HepG2 (cell line): ENCODE measurements at regions of chr9 and their contacts with region 1.

Region 1: GRCh38 chr9:4740638-4741364 is at the start of gene AK3:
- DNase-seq: peak; percentile 83
- ATAC-seq: peak; percentile 93
- H3K4me3 ChIP-seq: peak within 1 kb of the TSS; percentile 93 to 98 (median 96)
- H3K27ac ChIP-seq: peak within 1 kb of the TSS; percentile 100
- H3K4me1 ChIP-seq: peaks cover 40% of the 10 kb centered on the region
- H3K27me3 ChIP-seq: no peaks in the 10 kb centered on the region
- CTCF ChIP-seq: peak; percentile 70
- EP300 ChIP-seq: peak in 1 of 2 experiments; percentile 50; a peak in 1 of 4 replicates
- POLR2A ChIP-seq: peak; percentile 87 to 89
- RAD21 ChIP-seq: peak; percentile 86
- total RNA-seq, gene AK3: 109 and 153 TPM in 2 replicates

Region 2: DNA sequence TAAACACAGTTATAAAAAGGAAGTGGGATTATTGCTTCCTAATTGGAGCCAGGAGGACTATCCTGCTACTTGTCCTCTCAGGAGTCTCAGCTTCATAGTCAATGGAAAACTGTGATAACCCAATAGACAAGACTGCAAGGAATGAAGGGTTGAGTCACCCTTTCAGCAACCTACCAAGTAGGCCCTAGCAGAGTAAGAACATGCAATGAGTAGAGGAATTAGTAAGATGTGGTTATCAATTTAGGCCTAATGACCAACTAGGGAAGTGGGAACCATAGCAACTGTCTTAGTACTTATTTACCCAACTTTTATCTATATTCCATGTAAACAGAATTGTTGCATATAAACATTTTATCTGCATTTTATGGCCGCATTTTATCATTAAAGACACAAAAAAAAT is 1525.1 kb before region 1 on chr9:
- CTCF ChIA-PET with region 1: no interaction called
- POLR2A ChIA-PET with region 1: no interaction called
- in situ Hi-C with region 1: no loop called
- intact Hi-C with region 1: no loop called
- DNase-seq: no peak
- ATAC-seq: no peak
- H3K4me3 ChIP-seq: no peak overlapping the region
- H3K27ac ChIP-seq: no peak overlapping the region
- H3K4me1 ChIP-seq: no peaks in the 10 kb centered on the region
- H3K27me3 ChIP-seq: no peaks in the 10 kb centered on the region
- CTCF ChIP-seq: no peak
- EP300 ChIP-seq: no peak
- POLR2A ChIP-seq: no peak
- RAD21 ChIP-seq: no peak

Region 3: DNA sequence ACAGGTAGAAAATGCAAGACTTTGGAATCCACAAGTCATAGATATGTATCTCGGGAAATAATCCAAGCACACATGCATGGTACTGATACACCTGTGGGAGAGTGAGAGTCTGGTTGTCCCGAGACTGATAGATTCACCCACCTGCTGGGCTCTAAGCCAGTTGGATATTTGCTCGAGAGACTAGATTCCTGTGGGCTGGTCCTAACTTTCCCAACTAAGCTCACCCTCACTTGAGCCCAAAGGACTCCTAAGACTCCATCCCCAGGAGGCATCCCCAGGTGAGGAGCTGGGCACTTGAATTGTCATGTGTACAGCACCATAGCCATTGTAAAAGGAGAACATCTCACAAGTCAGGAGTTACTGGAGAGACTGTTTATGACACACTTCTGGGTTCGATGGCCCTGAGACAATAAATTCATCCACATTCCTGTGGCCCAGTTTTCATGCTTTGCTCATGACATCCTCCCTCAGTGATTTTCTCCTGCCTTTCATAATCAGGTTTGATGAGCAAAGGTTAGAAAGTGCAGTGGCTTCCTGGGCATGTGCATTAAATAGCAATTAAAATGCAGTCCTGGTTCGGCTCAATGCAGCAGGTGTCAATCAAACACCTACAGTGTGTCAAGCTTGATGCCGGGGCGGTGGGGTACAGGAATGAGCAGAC is 232.4 kb before region 1 on chr9:
- CTCF ChIA-PET with region 1: no interaction called
- POLR2A ChIA-PET with region 1: no interaction called
- in situ Hi-C with region 1: no loop called
- intact Hi-C with region 1: no loop called
- DNase-seq: no peak
- ATAC-seq: no peak
- H3K4me3 ChIP-seq: no peak overlapping the region
- H3K27ac ChIP-seq: no peak overlapping the region
- H3K4me1 ChIP-seq: 0 out of 2 replicates have a peak, but pooled peaks cover 6% of the 10 kb centered on the region
- H3K27me3 ChIP-seq: no peaks in the 10 kb centered on the region
- CTCF ChIP-seq: no peak
- EP300 ChIP-seq: no peak
- POLR2A ChIP-seq: no peak
- RAD21 ChIP-seq: no peak

Region 4: DNA sequence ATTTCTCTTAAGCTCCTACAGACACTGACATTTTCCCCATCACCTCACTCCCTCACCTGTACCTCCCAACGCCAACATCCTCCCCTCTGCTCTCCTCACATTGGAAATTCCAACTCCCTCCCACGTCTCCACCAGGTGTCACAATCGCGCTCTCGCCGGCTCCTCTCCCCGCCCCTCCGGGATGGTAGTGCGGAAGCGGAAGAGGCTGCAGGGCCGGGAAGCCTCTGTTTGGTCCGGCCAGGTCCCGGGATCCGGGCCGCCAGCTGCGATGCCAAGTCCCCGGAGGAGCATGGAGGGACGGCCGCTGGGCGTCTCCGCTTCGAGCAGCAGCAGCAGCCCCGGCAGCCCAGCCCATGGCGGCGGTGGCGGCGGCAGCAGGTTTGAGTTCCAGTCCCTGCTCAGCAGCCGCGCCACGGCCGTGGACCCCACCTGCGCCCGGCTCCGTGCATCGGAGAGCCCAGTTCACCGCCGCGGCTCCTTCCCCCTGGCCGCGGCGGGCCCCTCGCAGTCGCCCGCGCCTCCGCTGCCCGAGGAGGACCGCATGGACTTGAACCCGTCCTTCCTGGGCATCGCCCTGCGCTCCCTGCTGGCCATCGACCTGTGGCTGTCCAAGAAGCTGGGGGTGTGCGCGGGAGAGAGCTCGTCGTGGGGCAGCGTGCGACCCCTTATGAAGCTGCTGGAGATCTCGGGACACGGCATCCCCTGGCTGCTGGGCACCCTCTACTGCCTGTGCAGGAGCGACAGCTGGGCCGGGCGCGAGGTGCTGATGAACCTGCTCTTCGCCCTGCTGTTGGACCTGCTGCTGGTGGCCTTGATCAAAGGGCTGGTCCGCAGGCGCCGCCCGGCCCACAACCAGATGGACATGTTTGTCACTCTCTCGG is 78.5 kb before region 1 on chr9 and contains the start of gene PLPP6:
- CTCF ChIA-PET with region 1: no interaction called
- POLR2A ChIA-PET with region 1: interaction called, 21 read pairs
- in situ Hi-C with region 1: no loop called
- intact Hi-C with region 1: loop called (anchors 1 kb)
- DNase-seq: peak; percentile 86
- ATAC-seq: peak; percentile 92
- H3K4me3 ChIP-seq: peak within 1 kb of the TSS; percentile 75 to 81 (median 77)
- H3K27ac ChIP-seq: peak within 1 kb of the TSS; percentile 93
- H3K4me1 ChIP-seq: peaks cover 61% of the 10 kb centered on the region
- H3K27me3 ChIP-seq: no peaks in the 10 kb centered on the region
- CTCF ChIP-seq: peak; percentile 95
- EP300 ChIP-seq: peak; percentile 43 to 69; a peak in 3 of 4 replicates
- POLR2A ChIP-seq: peak; percentile 73 to 76
- RAD21 ChIP-seq: peak; percentile 40
- total RNA-seq, gene PLPP6: 9.0 and 15.5 TPM in 2 replicates

Region 5: DNA sequence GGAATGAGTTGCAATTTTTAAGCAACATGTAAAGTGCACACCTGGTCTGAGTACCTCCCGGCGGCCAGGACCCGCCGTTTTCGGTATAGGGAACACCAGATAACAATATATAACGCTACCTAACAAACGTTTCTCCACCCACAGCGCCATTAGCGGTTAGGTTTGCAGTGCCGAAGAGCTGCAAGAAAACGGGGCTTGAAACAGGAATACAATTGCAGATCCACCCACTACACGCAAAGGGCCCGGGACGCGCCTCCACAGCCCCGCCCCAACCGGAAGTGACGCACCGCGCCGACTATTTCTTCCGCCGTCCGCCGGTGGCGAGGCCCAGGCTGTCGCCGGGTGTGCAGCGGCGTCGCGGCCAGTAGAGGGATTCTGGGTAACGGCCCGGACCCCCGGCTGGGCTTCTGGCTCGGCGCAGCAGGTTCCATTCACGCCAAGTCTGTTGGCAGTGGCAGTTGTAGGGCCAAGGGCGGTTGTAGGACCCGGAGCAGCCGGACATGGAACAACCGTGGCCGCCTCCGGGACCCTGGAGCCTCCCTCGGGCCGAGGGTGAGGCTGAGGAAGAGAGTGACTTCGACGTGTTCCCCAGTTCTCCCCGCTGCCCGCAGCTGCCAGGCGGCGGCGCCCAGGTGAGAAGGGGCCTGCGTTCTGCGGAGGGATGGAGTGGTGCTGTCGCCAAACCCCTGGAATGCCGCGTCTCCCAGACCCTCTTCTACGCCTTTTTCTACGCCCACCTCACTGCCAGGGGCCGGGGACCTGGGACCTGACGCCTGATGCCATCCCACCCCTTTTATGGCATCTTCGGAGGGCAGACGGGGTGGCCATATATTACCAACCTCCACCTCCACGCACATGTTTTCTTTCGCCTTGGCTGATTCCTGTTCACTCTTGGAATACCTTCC is 61.3 kb before region 1 on chr9 and contains the start of gene CDC37L1:
- CTCF ChIA-PET with region 1: no interaction called
- POLR2A ChIA-PET with region 1: interaction called, 33 read pairs
- in situ Hi-C with region 1: no loop called
- intact Hi-C with region 1: loop called (anchors 1 kb)
- DNase-seq: peak; percentile 91
- ATAC-seq: peak; percentile 93
- H3K4me3 ChIP-seq: peak within 1 kb of the TSS; percentile 79 to 94 (median 87)
- H3K27ac ChIP-seq: peak within 1 kb of the TSS; percentile 99
- H3K4me1 ChIP-seq: peaks cover 48% of the 10 kb centered on the region
- H3K27me3 ChIP-seq: no peaks in the 10 kb centered on the region; a peak in 1 of 5 replicates
- CTCF ChIP-seq: peak; percentile 72
- EP300 ChIP-seq: peak; percentile 16 to 17; a peak in 2 of 4 replicates
- POLR2A ChIP-seq: peak; percentile 93 to 95
- RAD21 ChIP-seq: peak; percentile 63
- total RNA-seq, gene CDC37L1: 17.0 and 21.6 TPM in 2 replicates

Region 6: GRCh38 chr9:4700091-4700490 is 40.7 kb before region 1 on chr9:
- CTCF ChIA-PET with region 1: no interaction called
- POLR2A ChIA-PET with region 1: interaction called, 16 read pairs
- in situ Hi-C with region 1: no loop called
- intact Hi-C with region 1: loop called (anchors 5 kb)
- DNase-seq: peak; percentile 87
- ATAC-seq: peak; percentile 97
- H3K4me3 ChIP-seq: no peak overlapping the region
- H3K27ac ChIP-seq: peak overlapping the region; percentile 37
- H3K4me1 ChIP-seq: peaks cover 25% of the 10 kb centered on the region
- H3K27me3 ChIP-seq: no peaks in the 10 kb centered on the region
- CTCF ChIP-seq: no peak
- EP300 ChIP-seq: peak; percentile 65 to 77; a peak in 3 of 4 replicates
- POLR2A ChIP-seq: no peak
- RAD21 ChIP-seq: no peak; the same call in 1 of the 2 replicates

Region 7: DNA sequence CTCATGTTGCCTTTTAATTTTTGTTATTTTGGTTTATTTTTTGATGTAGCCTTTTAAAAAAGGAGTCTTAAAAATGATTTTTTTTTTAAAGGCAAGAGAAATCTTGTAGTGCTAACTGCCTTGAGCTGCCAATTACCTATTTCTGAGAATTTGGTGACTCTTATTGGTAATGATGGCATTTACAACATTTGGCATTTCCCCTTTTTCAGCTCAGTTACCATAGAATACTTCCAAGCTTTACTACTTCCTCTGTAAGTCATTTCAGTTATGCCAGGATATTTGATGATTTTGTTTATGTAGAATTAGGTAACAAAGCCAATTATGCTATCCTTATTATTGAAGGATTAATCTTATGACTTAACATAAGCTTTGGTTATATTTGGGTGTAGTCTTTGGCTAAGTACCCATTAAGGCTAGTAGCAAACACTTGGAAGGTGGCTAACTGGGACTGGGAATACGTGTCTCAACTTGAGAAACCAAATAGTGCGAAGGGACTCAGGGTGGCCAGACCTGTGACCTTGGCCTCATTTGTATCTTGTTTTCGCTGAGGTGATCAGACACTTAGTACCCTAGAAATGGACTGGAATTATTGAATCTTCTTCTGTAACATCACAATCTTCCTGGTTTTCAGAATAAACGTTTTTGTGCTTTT is 33.7 kb before region 1 on chr9:
- CTCF ChIA-PET with region 1: no interaction called
- POLR2A ChIA-PET with region 1: interaction called, 3 read pairs
- in situ Hi-C with region 1: no loop called
- intact Hi-C with region 1: loop called (anchors 5 kb)
- DNase-seq: no peak
- ATAC-seq: no peak
- H3K4me3 ChIP-seq: no peak overlapping the region
- H3K27ac ChIP-seq: no peak overlapping the region
- H3K4me1 ChIP-seq: no peaks in the 10 kb centered on the region
- H3K27me3 ChIP-seq: no peaks in the 10 kb centered on the region
- CTCF ChIP-seq: no peak
- EP300 ChIP-seq: no peak
- POLR2A ChIP-seq: no peak
- RAD21 ChIP-seq: no peak

Region 8: DNA sequence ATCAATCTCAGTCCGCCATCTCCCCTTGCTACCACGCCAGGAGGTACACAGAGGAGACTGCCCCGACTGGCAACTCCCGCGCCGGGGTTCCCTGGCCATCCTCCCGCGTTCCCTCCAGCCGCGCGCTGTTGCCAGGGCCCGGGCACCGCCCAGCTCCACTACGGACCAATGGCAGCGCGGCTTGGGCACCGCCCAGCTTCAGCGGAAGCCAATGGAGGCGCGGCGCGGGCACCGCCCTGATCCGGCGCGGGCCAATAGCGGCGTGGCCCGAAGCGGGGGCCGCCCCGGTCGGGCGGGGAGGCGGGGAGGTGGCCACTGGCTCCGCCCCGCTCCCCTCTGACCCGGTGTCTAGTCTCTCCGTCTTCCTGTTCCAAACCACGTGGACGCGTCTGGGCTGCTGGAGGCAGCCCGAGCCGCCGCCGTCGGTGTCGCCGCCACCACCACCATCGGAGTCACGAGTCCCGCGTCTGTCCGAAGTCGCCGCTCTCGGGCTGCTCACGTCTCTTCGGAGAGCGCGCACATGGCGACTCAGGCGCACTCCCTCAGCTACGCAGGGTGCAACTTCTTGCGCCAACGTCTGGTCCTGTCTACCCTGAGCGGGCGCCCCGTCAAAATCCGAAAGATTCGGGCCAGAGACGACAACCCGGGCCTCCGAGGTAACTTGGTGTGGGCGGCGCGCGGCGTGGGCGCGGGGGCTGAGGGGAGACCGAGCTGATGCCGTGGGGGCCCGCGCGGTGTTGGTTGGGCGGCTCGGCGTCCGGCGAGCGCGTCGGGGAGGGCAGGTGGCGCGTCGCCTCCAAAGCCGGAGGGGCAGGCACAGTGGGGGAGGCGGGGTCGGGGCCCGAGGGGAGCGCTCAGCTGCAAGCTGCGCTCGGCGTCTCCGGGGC is 52.0 kb after region 1 on chr9 and contains the start of gene RCL1:
- CTCF ChIA-PET with region 1: no interaction called
- POLR2A ChIA-PET with region 1: interaction called, 26 read pairs
- in situ Hi-C with region 1: no loop called
- intact Hi-C with region 1: no loop called
- DNase-seq: peak; percentile 88
- ATAC-seq: peak; percentile 97
- H3K4me3 ChIP-seq: peak within 1 kb of the TSS; percentile 71 to 87 (median 73)
- H3K27ac ChIP-seq: peak within 1 kb of the TSS; percentile 88
- H3K4me1 ChIP-seq: peaks cover 48% of the 10 kb centered on the region
- H3K27me3 ChIP-seq: no peaks in the 10 kb centered on the region; a peak in 1 of 5 replicates
- CTCF ChIP-seq: no peak
- EP300 ChIP-seq: peak in 1 of 2 experiments; percentile 65; a peak in 1 of 4 replicates
- POLR2A ChIP-seq: peak; percentile 70 to 72
- RAD21 ChIP-seq: peak; percentile 13; the same call in 1 of the 2 replicates
- total RNA-seq, gene RCL1: 31.6 and 33.9 TPM in 2 replicates

Region 9: GRCh38 chr9:4837261-4838188 is 96.7 kb after region 1 on chr9:
- CTCF ChIA-PET with region 1: no interaction called
- POLR2A ChIA-PET with region 1: interaction called, 30 read pairs
- in situ Hi-C with region 1: no loop called
- intact Hi-C with region 1: no loop called
- DNase-seq: peak; percentile 81
- ATAC-seq: peak; percentile 54
- H3K4me3 ChIP-seq: peak overlapping the region in 1 of 3 experiments; percentile 31; a peak in 2 of 6 replicates
- H3K27ac ChIP-seq: peak overlapping the region; percentile 75
- H3K4me1 ChIP-seq: peaks cover 100% of the 10 kb centered on the region
- H3K27me3 ChIP-seq: no peaks in the 10 kb centered on the region
- CTCF ChIP-seq: no peak
- EP300 ChIP-seq: 0 out of 4 replicates have a peak, but pooled peaks of 1 of the 2 experiments have one; percentile 33
- POLR2A ChIP-seq: 0 out of 4 replicates have a peak, but pooled peaks of 1 of the 2 experiments have one; percentile 23
- RAD21 ChIP-seq: no peak